H1 (cell line): ENCODE measurements at regions of chr20 and their contacts with region 1.

Region 1: DNA sequence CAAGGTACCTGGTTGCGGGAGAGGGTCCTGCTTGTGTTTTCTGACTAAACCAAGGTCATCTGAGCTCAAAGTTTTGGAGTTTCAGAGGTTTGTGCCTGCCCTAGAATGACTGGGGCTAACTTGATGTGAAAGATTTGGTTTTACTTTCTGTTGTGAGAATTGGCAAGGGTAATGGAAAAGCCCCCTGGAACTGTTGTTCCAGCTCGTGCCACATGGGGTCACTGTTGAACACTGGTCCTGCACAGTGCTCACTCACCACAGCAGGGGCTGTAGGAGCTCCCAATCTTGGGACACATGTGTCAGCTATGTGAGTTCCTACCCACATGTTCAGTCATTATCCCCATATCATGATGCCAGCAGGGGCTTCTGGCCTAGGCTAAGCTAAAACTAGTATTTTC is 6.5 kb downstream of the TGM6 start:
- DNase-seq: peak; percentile 47 to 86
- H3K4me3 ChIP-seq: no peak overlapping the region
- H3K27ac ChIP-seq: no peak overlapping the region
- H3K4me1 ChIP-seq: no peaks in the 10 kb centered on the region
- H3K27me3 ChIP-seq: no peaks in the 10 kb centered on the region; a peak in 2 of 7 replicates
- CTCF ChIP-seq: peak; percentile 85 to 92 (median 86)
- EP300 ChIP-seq: no peak
- POLR2A ChIP-seq: no peak
- RAD21 ChIP-seq: peak; percentile 70 to 80

Region 2: DNA sequence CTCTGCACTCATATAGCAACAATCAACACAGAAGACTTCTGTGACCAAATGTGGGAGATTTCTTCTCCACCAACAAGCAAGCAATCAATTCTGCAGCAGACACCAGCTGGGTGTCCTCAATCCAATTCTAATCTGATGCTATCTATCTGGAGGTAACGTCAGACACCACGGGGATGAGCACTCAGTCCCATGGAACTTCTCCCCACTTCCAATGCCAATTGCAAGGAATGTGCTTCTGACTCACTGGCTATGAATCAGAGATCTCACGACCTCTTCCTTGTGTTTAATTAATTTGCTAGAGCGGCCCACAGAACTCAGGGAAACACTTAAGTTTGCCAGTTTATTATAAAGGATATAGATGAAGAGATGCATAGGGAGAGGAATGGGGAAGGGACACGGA is 626.1 kb before region 1 on chr20:
- CTCF ChIA-PET with region 1: no interaction called
- POLR2A ChIA-PET with region 1: no interaction called
- DNase-seq: no peak
- H3K4me3 ChIP-seq: no peak overlapping the region
- H3K27ac ChIP-seq: no peak overlapping the region
- H3K4me1 ChIP-seq: no peaks in the 10 kb centered on the region
- H3K27me3 ChIP-seq: peaks cover 0 to 6% (median 0%) of the 10 kb centered on the region in 4 experiments; a peak in 2 of 7 replicates
- CTCF ChIP-seq: no peak
- EP300 ChIP-seq: no peak
- POLR2A ChIP-seq: no peak
- RAD21 ChIP-seq: no peak

Region 3: DNA sequence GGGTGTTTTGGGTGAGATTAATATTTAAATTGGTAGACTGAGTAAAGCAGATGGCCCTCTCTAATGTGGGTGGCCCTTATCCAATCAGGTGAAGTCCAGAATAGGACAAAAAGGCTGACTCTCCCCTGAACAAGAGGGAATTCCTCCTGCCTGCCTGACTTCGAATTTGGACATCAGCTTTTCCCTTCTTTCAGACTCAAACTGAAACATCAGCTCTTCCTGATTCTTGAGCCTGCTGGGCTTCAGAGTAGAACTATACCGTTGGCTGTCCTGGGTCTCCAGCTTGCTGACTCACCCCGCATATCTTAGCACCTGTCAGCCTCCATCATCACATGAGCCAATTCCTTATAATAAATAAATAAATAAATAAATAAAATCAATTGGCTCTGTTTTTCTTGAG is 21.5 kb before region 1 on chr20:
- CTCF ChIA-PET with region 1: interaction called, 23 read pairs
- POLR2A ChIA-PET with region 1: no interaction called
- DNase-seq: no peak
- H3K4me3 ChIP-seq: no peak overlapping the region
- H3K27ac ChIP-seq: no peak overlapping the region
- H3K4me1 ChIP-seq: no peaks in the 10 kb centered on the region
- H3K27me3 ChIP-seq: no peaks in the 10 kb centered on the region; a peak in 1 of 7 replicates
- CTCF ChIP-seq: no peak
- EP300 ChIP-seq: no peak
- POLR2A ChIP-seq: no peak
- RAD21 ChIP-seq: no peak

Region 4: GRCh38 chr20:2374346-2375125 is 12.6 kb before region 1 on chr20:
- CTCF ChIA-PET with region 1: interaction called, 210 read pairs
- POLR2A ChIA-PET with region 1: no interaction called
- DNase-seq: no peak
- H3K4me3 ChIP-seq: no peak overlapping the region
- H3K27ac ChIP-seq: no peak overlapping the region
- H3K4me1 ChIP-seq: peaks cover 0 to 2% (median 2%) of the 10 kb centered on the region in 4 experiments; a peak in 3 of 7 replicates
- H3K27me3 ChIP-seq: no peaks in the 10 kb centered on the region; a peak in 1 of 7 replicates
- CTCF ChIP-seq: no peak
- EP300 ChIP-seq: no peak
- POLR2A ChIP-seq: no peak
- RAD21 ChIP-seq: no peak

Region 5: DNA sequence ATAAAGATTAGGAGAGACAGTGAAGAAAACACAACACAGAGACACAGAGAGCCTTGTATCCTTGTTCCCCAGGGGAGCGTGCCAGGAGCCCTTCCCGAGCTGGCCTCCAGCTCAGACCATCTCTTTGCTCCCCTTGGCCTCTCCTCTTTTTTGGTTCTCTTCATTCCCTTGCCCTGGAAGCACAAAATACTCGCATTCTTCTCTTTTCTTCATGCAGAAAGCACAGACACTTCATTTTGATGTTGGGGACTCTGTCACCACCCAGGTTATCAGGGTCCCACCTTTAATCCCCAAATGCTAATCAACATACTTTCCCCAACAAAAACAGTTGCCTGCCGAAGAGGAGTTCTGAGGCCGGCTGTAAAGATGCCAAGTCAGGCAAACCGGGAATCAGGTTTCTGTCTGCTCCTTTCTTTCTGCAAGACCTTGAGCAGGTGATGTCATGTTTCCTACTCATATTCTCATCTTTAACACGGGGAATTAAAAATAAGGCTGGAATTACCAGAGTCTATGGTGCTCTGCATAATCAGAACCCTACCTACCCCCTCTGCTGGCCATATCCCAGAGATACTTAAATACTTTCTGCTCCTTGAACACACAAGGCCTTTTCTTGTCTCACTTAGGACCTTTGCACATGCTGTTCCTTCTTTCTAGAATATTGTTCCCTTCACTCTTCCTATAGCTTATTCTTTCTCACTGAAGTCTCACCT is 15.2 kb after region 1 on chr20:
- CTCF ChIA-PET with region 1: interaction called, 210 read pairs
- POLR2A ChIA-PET with region 1: interaction called, 3 read pairs
- DNase-seq: no peak
- H3K4me3 ChIP-seq: no peak overlapping the region
- H3K27ac ChIP-seq: no peak overlapping the region
- H3K4me1 ChIP-seq: 0 out of 7 replicates have a peak, but pooled peaks cover 0 to 2% (median 0%) of the 10 kb centered on the region in 4 experiments
- H3K27me3 ChIP-seq: no peaks in the 10 kb centered on the region
- CTCF ChIP-seq: peak in 2 of 3 experiments; percentile 18 to 39; a peak in 2 of 4 replicates
- EP300 ChIP-seq: no peak
- POLR2A ChIP-seq: no peak
- RAD21 ChIP-seq: peak; percentile 15 to 24; a peak in 2 of 4 replicates

Region 6: GRCh38 chr20:2416541-2417212 is 29.5 kb after region 1 on chr20:
- CTCF ChIA-PET with region 1: interaction called, 17 read pairs
- POLR2A ChIA-PET with region 1: interaction called, 3 read pairs
- DNase-seq: no peak
- H3K4me3 ChIP-seq: no peak overlapping the region
- H3K27ac ChIP-seq: no peak overlapping the region
- H3K4me1 ChIP-seq: no peaks in the 10 kb centered on the region
- H3K27me3 ChIP-seq: no peaks in the 10 kb centered on the region
- CTCF ChIP-seq: no peak
- EP300 ChIP-seq: no peak
- POLR2A ChIP-seq: no peak
- RAD21 ChIP-seq: no peak

Region 7: GRCh38 chr20:2446845-2447244 is 59.7 kb after region 1 on chr20:
- CTCF ChIA-PET with region 1: interaction called, 74 read pairs
- POLR2A ChIA-PET with region 1: no interaction called
- DNase-seq: no peak
- H3K4me3 ChIP-seq: no peak overlapping the region
- H3K27ac ChIP-seq: no peak overlapping the region
- H3K4me1 ChIP-seq: peaks cover 0 to 4% (median 0%) of the 10 kb centered on the region in 4 experiments; a peak in 1 of 7 replicates
- H3K27me3 ChIP-seq: no peaks in the 10 kb centered on the region
- CTCF ChIP-seq: no peak
- EP300 ChIP-seq: no peak
- POLR2A ChIP-seq: no peak
- RAD21 ChIP-seq: no peak

Region 8: DNA sequence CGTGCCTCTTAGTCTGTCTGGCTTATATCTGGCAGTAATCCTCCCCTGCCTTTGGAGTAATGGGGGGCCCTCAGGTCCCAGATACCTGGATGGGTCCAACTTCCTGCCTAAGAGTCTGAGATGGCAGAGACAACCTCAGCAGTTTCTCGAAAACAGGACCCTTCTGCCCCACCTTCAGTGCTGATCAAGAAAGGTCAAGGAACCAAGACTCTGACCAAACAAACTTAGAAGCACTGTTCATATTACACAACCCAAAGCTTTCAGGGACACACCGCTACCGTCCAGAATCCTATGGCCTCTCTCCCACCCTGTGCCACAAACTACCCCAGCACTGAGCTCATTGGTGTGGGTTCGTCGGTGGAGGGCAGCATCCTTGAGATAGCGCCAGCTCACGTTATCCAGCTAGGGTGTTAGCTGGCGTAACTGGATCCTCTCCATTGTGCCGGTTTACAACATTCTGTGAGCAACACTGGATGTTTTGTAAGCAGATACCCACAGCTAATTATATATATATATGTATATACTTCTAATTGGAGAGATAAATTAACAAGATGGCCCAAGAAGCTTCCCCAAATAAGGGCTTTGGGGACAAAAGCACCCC is 141.6 kb after region 1 on chr20:
- CTCF ChIA-PET with region 1: no interaction called
- POLR2A ChIA-PET with region 1: no interaction called
- DNase-seq: no peak
- H3K4me3 ChIP-seq: no peak overlapping the region
- H3K27ac ChIP-seq: no peak overlapping the region
- H3K4me1 ChIP-seq: no peaks in the 10 kb centered on the region
- H3K27me3 ChIP-seq: peaks cover 2 to 23% (median 18%) of the 10 kb centered on the region in 4 experiments; a peak in 6 of 7 replicates
- CTCF ChIP-seq: no peak
- EP300 ChIP-seq: no peak
- POLR2A ChIP-seq: no peak
- RAD21 ChIP-seq: no peak